B cell (primary cell): ENCODE measurements at regions of chr10 and their contacts with region 1.

Region 1: GRCh38 chr10:124741281-124741921 is 2.8 kb downstream of the FAM53B start:
- DNase-seq: peak; percentile 86
- ATAC-seq: peak; percentile 51
- H3K4me3 ChIP-seq: peak overlapping the region; percentile 66 to 92 (median 78)
- H3K4me3 Mint-ChIP-seq: peak overlapping the region; percentile 93
- H3K27ac ChIP-seq: peak overlapping the region; percentile 79 to 98
- H3K27ac Mint-ChIP-seq: peak overlapping the region; percentile 98
- H3K4me1 ChIP-seq: peaks cover 60 to 73% of the 10 kb centered on the region in 2 donors
- H3K4me1 Mint-ChIP-seq: peaks cover 73% of the 10 kb centered on the region
- H3K27me3 ChIP-seq: no peaks in the 10 kb centered on the region
- H3K27me3 Mint-ChIP-seq: no peaks in the 10 kb centered on the region
- CTCF ChIP-seq: peak; percentile 95

Region 2: GRCh38 chr10:124231168-124232155 is 509.9 kb before region 1 on chr10:
- CTCF ChIA-PET with region 1: no interaction called
- POLR2A ChIA-PET with region 1: no interaction called
- intact Hi-C with region 1: loop called (anchors 2 kb)
- DNase-seq: peak; percentile 62
- ATAC-seq: peak; percentile 55
- H3K4me3 ChIP-seq: no peak overlapping the region
- H3K4me3 Mint-ChIP-seq: peak overlapping the region; percentile 19
- H3K27ac ChIP-seq: no peak overlapping the region
- H3K27ac Mint-ChIP-seq: peak overlapping the region; percentile 88
- H3K4me1 ChIP-seq: no peaks in the 10 kb centered on the region
- H3K4me1 Mint-ChIP-seq: peaks cover 3% of the 10 kb centered on the region
- H3K27me3 ChIP-seq: no peaks in the 10 kb centered on the region
- H3K27me3 Mint-ChIP-seq: no peaks in the 10 kb centered on the region
- CTCF ChIP-seq: no peak

Region 3: GRCh38 chr10:124356701-124357562 is 384.5 kb before region 1 on chr10:
- CTCF ChIA-PET with region 1: no interaction called
- POLR2A ChIA-PET with region 1: no interaction called
- intact Hi-C with region 1: no loop called
- DNase-seq: no peak
- ATAC-seq: no peak
- H3K4me3 ChIP-seq: no peak overlapping the region
- H3K4me3 Mint-ChIP-seq: no peak overlapping the region
- H3K27ac ChIP-seq: no peak overlapping the region
- H3K27ac Mint-ChIP-seq: no peak overlapping the region
- H3K4me1 ChIP-seq: peaks cover 8 to 9% of the 10 kb centered on the region in 2 donors
- H3K4me1 Mint-ChIP-seq: peaks cover 11% of the 10 kb centered on the region
- H3K27me3 ChIP-seq: peaks cover 0 to 2% (median 0%) of the 10 kb centered on the region in 4 experiments
- H3K27me3 Mint-ChIP-seq: peaks cover 3% of the 10 kb centered on the region
- CTCF ChIP-seq: no peak

Region 4: GRCh38 chr10:124530215-124530665 is 211.2 kb before region 1 on chr10:
- CTCF ChIA-PET with region 1: interaction called, 415 read pairs
- POLR2A ChIA-PET with region 1: interaction called, 62 read pairs
- intact Hi-C with region 1: loop called (anchors 1 kb)
- DNase-seq: peak; percentile 93
- ATAC-seq: peak; percentile 86
- H3K4me3 ChIP-seq: no peak overlapping the region
- H3K4me3 Mint-ChIP-seq: peak overlapping the region; percentile 74
- H3K27ac ChIP-seq: no peak overlapping the region
- H3K27ac Mint-ChIP-seq: peak overlapping the region; percentile 92
- H3K4me1 ChIP-seq: peaks cover 37 to 53% of the 10 kb centered on the region in 2 donors
- H3K4me1 Mint-ChIP-seq: peaks cover 50% of the 10 kb centered on the region
- H3K27me3 ChIP-seq: no peaks in the 10 kb centered on the region
- H3K27me3 Mint-ChIP-seq: no peaks in the 10 kb centered on the region
- CTCF ChIP-seq: peak; percentile 86

Region 5: GRCh38 chr10:124612611-124613498 is 128.5 kb before region 1 on chr10:
- CTCF ChIA-PET with region 1: interaction called, 91 read pairs
- POLR2A ChIA-PET with region 1: interaction called, 6 read pairs
- intact Hi-C with region 1: no loop called
- DNase-seq: peak; percentile 70
- ATAC-seq: peak; percentile 63
- H3K4me3 ChIP-seq: no peak overlapping the region
- H3K4me3 Mint-ChIP-seq: peak overlapping the region; percentile 57
- H3K27ac ChIP-seq: peak overlapping the region; percentile 86 to 97
- H3K27ac Mint-ChIP-seq: peak overlapping the region; percentile 90
- H3K4me1 ChIP-seq: peaks cover 79 to 96% of the 10 kb centered on the region in 2 donors
- H3K4me1 Mint-ChIP-seq: peaks cover 77% of the 10 kb centered on the region
- H3K27me3 ChIP-seq: no peaks in the 10 kb centered on the region
- H3K27me3 Mint-ChIP-seq: no peaks in the 10 kb centered on the region
- CTCF ChIP-seq: no peak

Region 6: GRCh38 chr10:124647421-124648130 is 93.8 kb before region 1 on chr10:
- CTCF ChIA-PET with region 1: interaction called, 59 read pairs
- POLR2A ChIA-PET with region 1: interaction called, 7 read pairs
- intact Hi-C with region 1: no loop called
- DNase-seq: peak; percentile 80
- ATAC-seq: peak; percentile 78
- H3K4me3 ChIP-seq: peak overlapping the region in 4 of 5 experiments; percentile 15 to 45 (median 26)
- H3K4me3 Mint-ChIP-seq: peak overlapping the region; percentile 85
- H3K27ac ChIP-seq: peak overlapping the region; percentile 71 to 92
- H3K27ac Mint-ChIP-seq: peak overlapping the region; percentile 97
- H3K4me1 ChIP-seq: peaks cover 99 to 100% of the 10 kb centered on the region in 2 donors
- H3K4me1 Mint-ChIP-seq: peaks cover 99% of the 10 kb centered on the region
- H3K27me3 ChIP-seq: no peaks in the 10 kb centered on the region
- H3K27me3 Mint-ChIP-seq: no peaks in the 10 kb centered on the region
- CTCF ChIP-seq: peak; percentile 25

Region 7: GRCh38 chr10:124708922-124709520 is 32.4 kb before region 1 on chr10:
- CTCF ChIA-PET with region 1: interaction called, 12 read pairs
- POLR2A ChIA-PET with region 1: interaction called, 6 read pairs
- intact Hi-C with region 1: no loop called
- DNase-seq: no peak
- ATAC-seq: no peak
- H3K4me3 ChIP-seq: no peak overlapping the region
- H3K4me3 Mint-ChIP-seq: peak overlapping the region; percentile 5
- H3K27ac ChIP-seq: peak overlapping the region; percentile 26 to 61
- H3K27ac Mint-ChIP-seq: peak overlapping the region; percentile 80
- H3K4me1 ChIP-seq: peaks cover 88 to 98% of the 10 kb centered on the region in 2 donors
- H3K4me1 Mint-ChIP-seq: peaks cover 87% of the 10 kb centered on the region
- H3K27me3 ChIP-seq: no peaks in the 10 kb centered on the region
- H3K27me3 Mint-ChIP-seq: no peaks in the 10 kb centered on the region
- CTCF ChIP-seq: no peak

Region 8: DNA sequence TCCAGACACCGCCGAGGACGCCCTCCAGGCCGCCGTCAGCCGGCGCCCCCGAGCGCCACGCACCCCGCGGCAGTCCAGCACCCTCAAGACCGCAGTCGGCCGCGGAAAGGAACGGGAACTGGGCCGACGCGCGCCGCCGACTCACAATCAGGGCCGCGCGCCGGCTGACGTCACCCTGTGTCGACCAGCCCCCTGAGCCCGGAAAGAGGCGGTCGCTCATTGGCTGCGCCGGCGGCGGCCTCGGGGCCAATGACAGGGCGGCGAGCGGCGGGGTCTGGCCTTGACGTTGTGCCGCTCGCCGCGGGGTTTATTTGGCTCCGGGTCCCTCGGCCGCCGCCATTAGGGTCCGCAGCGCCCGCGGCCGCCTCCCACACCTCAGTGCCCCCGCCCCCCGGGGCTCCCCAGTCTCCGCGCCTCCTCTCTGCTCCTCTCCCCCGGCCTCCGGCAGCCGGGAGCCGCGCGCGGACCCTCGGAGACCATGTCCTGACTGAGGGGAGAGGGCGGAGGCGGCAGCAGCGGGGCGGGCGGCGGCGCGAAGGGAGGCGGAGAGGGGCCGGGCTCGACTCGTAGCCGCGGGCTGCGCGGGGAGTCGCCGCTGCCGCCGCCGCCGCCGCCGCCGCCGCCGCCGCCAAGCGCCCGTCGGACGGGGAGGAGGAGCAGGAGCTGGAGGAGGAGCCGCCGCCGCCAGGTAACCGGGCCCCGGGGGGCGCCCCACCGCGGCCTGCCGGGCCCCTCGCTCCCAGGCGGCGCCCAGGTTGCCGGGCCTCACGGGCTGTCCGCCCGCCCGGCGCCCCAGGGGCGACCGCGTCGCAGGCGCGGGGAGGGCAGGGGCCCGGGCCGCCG is 175.4 kb after region 1 on chr10:
- CTCF ChIA-PET with region 1: no interaction called
- POLR2A ChIA-PET with region 1: no interaction called
- intact Hi-C with region 1: loop called (anchors 2 kb)
- DNase-seq: peak; percentile 98
- ATAC-seq: peak; percentile 89
- H3K4me3 ChIP-seq: peak overlapping the region; percentile 63 to 87 (median 79)
- H3K4me3 Mint-ChIP-seq: peak overlapping the region; percentile 90
- H3K27ac ChIP-seq: peak overlapping the region; percentile 81 to 87
- H3K27ac Mint-ChIP-seq: peak overlapping the region; percentile 90
- H3K4me1 ChIP-seq: peaks cover 18 to 20% of the 10 kb centered on the region in 2 donors
- H3K4me1 Mint-ChIP-seq: peaks cover 37% of the 10 kb centered on the region
- H3K27me3 ChIP-seq: peaks cover 0 to 5% (median 3%) of the 10 kb centered on the region in 4 experiments
- H3K27me3 Mint-ChIP-seq: peaks cover 9% of the 10 kb centered on the region
- CTCF ChIP-seq: no peak